CD4-positive, alpha-beta T cell (primary cell): ENCODE measurements at regions of chr11 and their contacts with region 1.

Region 1: DNA sequence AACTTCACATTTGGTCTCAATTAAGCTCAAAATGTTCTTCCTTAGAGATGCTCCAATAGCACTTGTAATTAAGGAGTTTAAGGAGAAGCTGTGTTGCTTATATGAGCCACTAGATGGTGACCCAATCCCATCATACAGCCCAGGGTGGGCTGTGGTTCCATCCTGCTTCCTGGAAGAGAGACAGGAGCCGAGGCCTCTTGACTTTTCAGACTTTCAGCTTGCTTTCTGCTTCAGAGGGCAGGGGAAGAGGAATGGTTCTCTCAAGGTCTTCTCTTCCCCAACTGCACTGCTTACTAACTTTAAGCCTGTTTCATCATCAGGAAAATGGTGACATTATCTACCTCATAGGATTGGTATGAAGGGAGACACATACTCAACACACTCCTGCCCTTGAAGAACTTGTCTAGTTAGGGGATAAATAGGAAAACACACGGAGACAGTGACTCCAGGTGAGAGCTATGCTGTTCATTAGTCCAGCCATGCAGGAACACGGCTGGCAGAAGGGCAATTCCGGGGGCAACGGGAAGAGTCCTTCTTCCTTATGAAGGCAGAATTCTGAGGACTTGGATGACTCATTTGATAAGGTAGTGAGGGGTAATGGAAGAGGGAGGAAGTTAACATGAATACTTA is 20.1 kb downstream of the TMEM218 start:
- DNase-seq: peak in 4 of 14 experiments; percentile 17 to 34 (median 28)
- ATAC-seq: no peak
- H3K4me3 ChIP-seq: no peak overlapping the region
- H3K4me3 Mint-ChIP-seq: no peak overlapping the region
- H3K27ac ChIP-seq: no peak overlapping the region
- H3K27ac Mint-ChIP-seq: no peak overlapping the region
- H3K4me1 ChIP-seq: no peaks in the 10 kb centered on the region
- H3K4me1 Mint-ChIP-seq: no peaks in the 10 kb centered on the region
- H3K27me3 ChIP-seq: no peaks in the 10 kb centered on the region
- H3K27me3 Mint-ChIP-seq: no peaks in the 10 kb centered on the region
- CTCF ChIP-seq: peak; percentile 22

Region 2: DNA sequence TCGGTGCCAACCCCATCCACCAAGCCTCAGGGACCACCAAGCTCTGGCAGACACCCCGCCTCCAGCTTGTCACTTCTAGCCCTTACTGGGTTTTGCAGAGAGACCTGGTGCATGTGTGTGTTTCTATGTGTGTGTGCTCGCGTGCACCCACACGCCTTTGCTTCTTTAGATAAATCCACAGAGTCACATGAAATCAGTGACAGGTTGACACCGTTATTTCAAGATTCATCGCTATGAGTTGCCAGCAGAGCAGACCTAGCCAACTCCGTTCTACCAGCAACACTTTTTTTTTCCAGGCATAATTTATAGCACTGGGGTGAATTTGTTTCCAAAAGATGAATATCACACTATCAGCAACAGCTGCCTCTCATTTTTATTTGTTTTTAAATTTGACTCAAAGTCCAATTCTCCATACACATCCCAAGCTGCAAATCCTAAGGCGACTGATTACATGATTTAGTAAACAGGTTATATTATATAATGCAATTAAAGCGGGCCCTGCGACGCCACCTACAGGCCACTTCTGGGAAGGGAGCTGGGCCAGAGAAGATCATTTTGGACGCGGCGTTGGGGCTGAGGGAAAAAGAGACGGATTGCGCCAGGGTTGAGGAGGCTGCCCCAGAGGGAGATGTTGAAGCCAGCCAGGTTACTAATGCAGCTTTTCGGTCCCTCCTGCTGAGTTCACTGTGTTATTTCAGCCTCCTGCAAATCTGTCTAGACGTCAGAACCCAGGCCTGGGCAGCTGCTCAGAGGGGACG is 254.2 kb after region 1 on chr11:
- CTCF ChIA-PET with region 1: no interaction called
- POLR2A ChIA-PET with region 1: no interaction called
- intact Hi-C with region 1: loop called in 1 of 2 experiments (anchors 5 kb)
- DNase-seq: peak in 11 of 14 experiments; percentile 3 to 61 (median 21)
- ATAC-seq: peak; percentile 32
- H3K4me3 ChIP-seq: no peak overlapping the region
- H3K4me3 Mint-ChIP-seq: no peak overlapping the region
- H3K27ac ChIP-seq: no peak overlapping the region
- H3K27ac Mint-ChIP-seq: no peak overlapping the region
- H3K4me1 ChIP-seq: peaks cover 3% of the 10 kb centered on the region
- H3K4me1 Mint-ChIP-seq: no peaks in the 10 kb centered on the region
- H3K27me3 ChIP-seq: no peaks in the 10 kb centered on the region
- H3K27me3 Mint-ChIP-seq: peaks cover 23% of the 10 kb centered on the region
- CTCF ChIP-seq: peak; percentile 58